MCF 10A (cell line): ENCODE measurements at regions of chr11 and their contacts with region 1.

Region 1: GRCh38 chr11:66421492-66422205 is 814 bp downstream of the NPAS4 start:
- DNase-seq: peak; percentile 87
- H3K4me3 Mint-ChIP-seq: no peak overlapping the region
- H3K27ac Mint-ChIP-seq: no peak overlapping the region
- H3K4me1 Mint-ChIP-seq: peaks cover 17% of the 10 kb centered on the region
- H3K27me3 Mint-ChIP-seq: peaks cover 58% of the 10 kb centered on the region
- CTCF ChIP-seq: no peak

Region 2: GRCh38 chr11:66084821-66085475 is 336.7 kb before region 1 on chr11:
- CTCF ChIA-PET with region 1: no interaction called
- POLR2A ChIA-PET with region 1: no interaction called
- intact Hi-C with region 1: no loop called
- DNase-seq: no peak
- H3K4me3 Mint-ChIP-seq: no peak overlapping the region
- H3K27ac Mint-ChIP-seq: no peak overlapping the region
- H3K4me1 Mint-ChIP-seq: peaks cover 38% of the 10 kb centered on the region
- H3K27me3 Mint-ChIP-seq: no peaks in the 10 kb centered on the region
- CTCF ChIP-seq: no peak

Region 3: GRCh38 chr11:66408488-66409214 is 13.0 kb before region 1 on chr11:
- CTCF ChIA-PET with region 1: interaction called, 31 read pairs
- POLR2A ChIA-PET with region 1: interaction called, 3 read pairs
- intact Hi-C with region 1: no loop called
- DNase-seq: peak; percentile 83
- H3K4me3 Mint-ChIP-seq: peak overlapping the region; percentile 56
- H3K27ac Mint-ChIP-seq: no peak overlapping the region
- H3K4me1 Mint-ChIP-seq: no peaks in the 10 kb centered on the region
- H3K27me3 Mint-ChIP-seq: peaks cover 64% of the 10 kb centered on the region
- CTCF ChIP-seq: peak; percentile 100

Region 4: GRCh38 chr11:66438504-66439466 is 17.1 kb after region 1 on chr11 and contains the start of gene MRPL11:
- CTCF ChIA-PET with region 1: interaction called, 12 read pairs
- POLR2A ChIA-PET with region 1: interaction called, 6 read pairs
- intact Hi-C with region 1: no loop called
- DNase-seq: peak; percentile 95
- H3K4me3 Mint-ChIP-seq: peak within 1 kb of the TSS; percentile 84
- H3K27ac Mint-ChIP-seq: peak within 1 kb of the TSS; percentile 97
- H3K4me1 Mint-ChIP-seq: peaks cover 18% of the 10 kb centered on the region
- H3K27me3 Mint-ChIP-seq: no peaks in the 10 kb centered on the region
- CTCF ChIP-seq: peak; percentile 62
- total RNA-seq, gene MRPL11: 65.5 and 69.1 TPM in 2 replicates